AG04449 (cell line): ENCODE measurements at regions of chr2 and their contacts with region 1.

Region 1: DNA sequence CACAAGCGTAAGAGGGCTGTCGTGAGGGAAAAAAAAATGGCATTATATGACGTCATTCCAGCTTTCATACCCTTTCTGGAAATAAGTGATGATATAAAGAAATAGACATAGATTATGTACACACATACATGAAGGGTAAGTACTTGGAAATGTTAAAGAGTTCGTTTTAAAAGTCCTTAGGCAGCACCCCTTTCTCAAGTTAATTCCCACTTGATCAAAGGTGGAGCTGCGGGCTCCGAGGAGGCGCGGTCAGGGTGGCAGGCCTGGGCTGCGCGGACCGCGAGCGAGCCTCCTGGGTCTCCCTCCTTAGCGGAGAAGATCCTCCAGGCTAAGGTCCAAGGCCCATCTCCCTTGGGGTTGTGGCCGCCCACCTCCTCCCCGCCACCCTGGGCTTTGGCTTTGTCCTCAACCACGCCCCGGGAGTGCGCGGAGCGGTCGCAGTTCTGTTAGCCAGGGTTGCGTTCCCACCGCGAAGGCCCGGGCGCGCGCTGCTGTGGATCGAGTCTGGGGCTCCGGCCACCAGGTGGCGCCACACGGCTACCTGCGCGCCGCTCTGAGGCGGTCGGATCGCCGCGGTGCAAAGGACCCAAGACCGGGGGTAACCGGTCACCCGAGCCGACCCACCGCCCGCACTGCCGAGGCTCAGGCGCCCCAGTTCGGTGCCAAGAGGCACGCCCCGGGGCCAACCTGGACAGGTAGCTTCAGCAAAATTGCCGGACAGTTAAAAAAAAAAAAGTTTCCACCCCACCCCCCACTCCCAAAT is 66.8 kb downstream of the HNRNPLL start:
- DNase-seq: no peak
- H3K4me3 ChIP-seq: peak overlapping the region; percentile 66
- CTCF ChIP-seq: peak; percentile 94

Region 2: GRCh38 chr2:38508311-38509039 is 27.4 kb before region 1 on chr2:
- CTCF ChIA-PET with region 1: interaction called, 19 read pairs
- POLR2A ChIA-PET with region 1: no interaction called
- DNase-seq: no peak
- H3K4me3 ChIP-seq: no peak overlapping the region
- CTCF ChIP-seq: peak; percentile 10

Region 3: GRCh38 chr2:38554973-38555595 is 19.2 kb after region 1 on chr2:
- CTCF ChIA-PET with region 1: interaction called, 66 read pairs
- POLR2A ChIA-PET with region 1: no interaction called
- DNase-seq: no peak
- H3K4me3 ChIP-seq: no peak overlapping the region
- CTCF ChIP-seq: peak; percentile 30

Region 4: DNA sequence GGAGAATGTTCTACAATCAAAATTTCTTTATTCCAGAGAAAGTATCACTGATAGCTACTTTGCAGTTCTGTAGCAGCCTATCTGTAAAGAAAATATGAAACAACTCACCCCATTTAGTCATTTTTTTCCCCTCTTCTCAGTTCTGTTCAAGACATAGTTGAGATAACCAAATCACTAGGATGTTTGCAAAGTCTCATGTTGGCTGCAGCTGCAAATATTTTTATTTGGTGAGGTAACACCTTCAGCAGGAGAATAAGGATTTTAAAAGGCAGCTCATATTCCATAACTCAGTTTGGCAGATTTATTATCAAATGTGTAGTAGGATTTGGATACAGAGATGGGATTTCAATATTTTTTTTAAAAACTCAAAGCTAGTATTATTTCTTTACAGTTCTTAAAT is 25.8 kb after region 1 on chr2:
- CTCF ChIA-PET with region 1: interaction called, 29 read pairs
- POLR2A ChIA-PET with region 1: no interaction called
- DNase-seq: no peak
- H3K4me3 ChIP-seq: no peak overlapping the region
- CTCF ChIP-seq: no peak

Region 5: GRCh38 chr2:38572167-38572566 is 36.2 kb after region 1 on chr2:
- CTCF ChIA-PET with region 1: interaction called, 14 read pairs
- POLR2A ChIA-PET with region 1: no interaction called
- DNase-seq: peak; percentile 23
- H3K4me3 ChIP-seq: no peak overlapping the region
- CTCF ChIP-seq: no peak

Region 6: DNA sequence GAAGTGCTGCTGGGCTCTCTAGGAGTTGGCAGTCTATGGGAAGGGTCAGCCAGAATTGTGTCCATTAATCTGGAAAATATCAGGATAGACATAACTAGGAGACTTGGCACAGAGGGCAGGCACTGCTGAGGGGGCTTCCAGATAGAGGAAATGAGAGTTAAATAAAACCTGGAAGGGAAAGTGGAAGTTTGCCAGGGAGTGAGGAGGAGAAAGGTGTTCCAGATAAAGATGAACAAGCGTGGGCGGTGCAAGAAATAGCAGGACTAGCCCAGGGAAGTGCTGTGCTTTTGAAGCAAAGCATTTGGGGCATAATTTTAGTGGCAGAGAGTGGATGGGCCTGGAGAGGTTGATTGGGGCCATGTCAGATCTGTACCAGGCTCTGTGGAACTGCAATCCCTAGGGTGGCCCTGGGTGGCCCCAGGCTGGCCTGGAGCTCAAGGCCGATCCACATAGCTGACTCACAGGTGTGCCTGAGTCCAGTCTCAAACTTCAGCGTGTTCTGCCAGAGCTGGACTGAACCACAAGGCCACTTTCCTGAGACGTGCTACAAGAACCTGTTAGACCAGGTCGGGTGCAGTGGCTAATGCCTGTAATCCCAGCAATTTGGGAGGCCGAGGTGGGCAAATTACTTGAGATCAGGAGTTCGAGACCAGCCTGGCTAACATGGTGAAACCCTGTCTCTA is 156.9 kb after region 1 on chr2:
- CTCF ChIA-PET with region 1: no interaction called
- POLR2A ChIA-PET with region 1: no interaction called
- DNase-seq: no peak
- H3K4me3 ChIP-seq: no peak overlapping the region
- CTCF ChIP-seq: no peak

Region 7: GRCh38 chr2:38720613-38721241 is 184.8 kb after region 1 on chr2:
- CTCF ChIA-PET with region 1: interaction called, 45 read pairs
- POLR2A ChIA-PET with region 1: no interaction called
- DNase-seq: peak; percentile 59
- H3K4me3 ChIP-seq: no peak overlapping the region
- CTCF ChIP-seq: no peak

Region 8: GRCh38 chr2:38740851-38741731 is 205.2 kb after region 1 on chr2:
- CTCF ChIA-PET with region 1: interaction called, 108 read pairs
- POLR2A ChIA-PET with region 1: no interaction called
- DNase-seq: no peak
- H3K4me3 ChIP-seq: no peak overlapping the region
- CTCF ChIP-seq: no peak